ENCODE measurements at regions of chr14 and their contacts with region 1.

Region 1: DNA sequence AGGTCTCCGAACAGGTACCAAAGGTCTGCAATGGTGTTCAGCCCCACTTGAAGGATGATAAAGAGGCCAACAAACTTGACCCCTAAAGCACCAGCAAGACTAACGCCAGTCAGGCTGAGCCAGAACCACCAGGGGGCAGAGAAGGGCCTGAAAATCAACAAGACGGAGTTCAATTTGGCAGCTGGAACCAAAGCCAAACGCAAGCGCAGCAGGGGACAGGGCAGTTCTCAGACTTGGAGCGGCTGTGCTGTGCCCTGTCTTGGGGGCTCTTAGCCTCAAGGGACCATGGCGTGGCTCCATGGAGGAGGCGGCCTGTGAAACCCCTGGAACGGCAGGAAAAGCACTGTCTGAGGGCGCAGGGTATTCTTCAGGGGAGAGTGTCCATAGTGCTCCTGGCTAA is 19.6 kb downstream of the POMT2 start:
- DNase-seq: peak; percentile 52
- H3K4me3 ChIP-seq: no peak overlapping the region
- H3K27ac ChIP-seq: no peak overlapping the region
- H3K4me1 ChIP-seq: peaks cover 24% of the 10 kb centered on the region
- H3K27me3 ChIP-seq: no peaks in the 10 kb centered on the region
- CTCF ChIP-seq: peak; percentile 74 to 90

Region 2: GRCh38 chr14:77314043-77314442 is 12.9 kb after region 1 on chr14:
- CTCF ChIA-PET with region 1: interaction called, 14 read pairs
- dilution Hi-C with region 1: no loop called
- in situ Hi-C with region 1: no loop called
- intact Hi-C with region 1: loop called (anchors 1 kb)
- DNase-seq: peak; percentile 93
- H3K4me3 ChIP-seq: no peak overlapping the region
- H3K27ac ChIP-seq: peak overlapping the region; percentile 31
- H3K4me1 ChIP-seq: peaks cover 45% of the 10 kb centered on the region
- H3K27me3 ChIP-seq: no peaks in the 10 kb centered on the region
- CTCF ChIP-seq: no peak

Region 3: GRCh38 chr14:77320238-77320935 is 19.3 kb after region 1 on chr14 and contains the start of gene POMT2:
- CTCF ChIA-PET with region 1: interaction called, 16 read pairs
- dilution Hi-C with region 1: no loop called
- in situ Hi-C with region 1: no loop called
- intact Hi-C with region 1: loop called (anchors 1 kb)
- DNase-seq: peak; percentile 88
- H3K4me3 ChIP-seq: peak within 1 kb of the TSS; percentile 89 to 92 (median 90)
- H3K27ac ChIP-seq: peak within 1 kb of the TSS; percentile 87
- H3K4me1 ChIP-seq: peaks cover 38% of the 10 kb centered on the region
- H3K27me3 ChIP-seq: no peaks in the 10 kb centered on the region
- CTCF ChIP-seq: peak in 1 of 2 donors; percentile 34
- total RNA-seq, gene POMT2: 17.0 to 38.4 TPM

Region 4: GRCh38 chr14:77409131-77409533 is 108.0 kb after region 1 on chr14:
- CTCF ChIA-PET with region 1: interaction called, 8 read pairs
- dilution Hi-C with region 1: no loop called
- in situ Hi-C with region 1: no loop called
- intact Hi-C with region 1: loop called (anchors 1 kb)
- DNase-seq: peak; percentile 18
- H3K4me3 ChIP-seq: no peak overlapping the region
- H3K27ac ChIP-seq: no peak overlapping the region
- H3K4me1 ChIP-seq: no peaks in the 10 kb centered on the region
- H3K27me3 ChIP-seq: no peaks in the 10 kb centered on the region
- CTCF ChIP-seq: peak in 1 of 2 donors; percentile 39

Region 5: GRCh38 chr14:77554207-77554606 is 253.1 kb after region 1 on chr14:
- CTCF ChIA-PET with region 1: no interaction called
- dilution Hi-C with region 1: no loop called
- in situ Hi-C with region 1: no loop called
- intact Hi-C with region 1: loop called (anchors 1 kb)
- DNase-seq: no peak
- H3K4me3 ChIP-seq: no peak overlapping the region
- H3K27ac ChIP-seq: no peak overlapping the region
- H3K4me1 ChIP-seq: no peaks in the 10 kb centered on the region
- H3K27me3 ChIP-seq: no peaks in the 10 kb centered on the region
- CTCF ChIP-seq: no peak

Region 6: DNA sequence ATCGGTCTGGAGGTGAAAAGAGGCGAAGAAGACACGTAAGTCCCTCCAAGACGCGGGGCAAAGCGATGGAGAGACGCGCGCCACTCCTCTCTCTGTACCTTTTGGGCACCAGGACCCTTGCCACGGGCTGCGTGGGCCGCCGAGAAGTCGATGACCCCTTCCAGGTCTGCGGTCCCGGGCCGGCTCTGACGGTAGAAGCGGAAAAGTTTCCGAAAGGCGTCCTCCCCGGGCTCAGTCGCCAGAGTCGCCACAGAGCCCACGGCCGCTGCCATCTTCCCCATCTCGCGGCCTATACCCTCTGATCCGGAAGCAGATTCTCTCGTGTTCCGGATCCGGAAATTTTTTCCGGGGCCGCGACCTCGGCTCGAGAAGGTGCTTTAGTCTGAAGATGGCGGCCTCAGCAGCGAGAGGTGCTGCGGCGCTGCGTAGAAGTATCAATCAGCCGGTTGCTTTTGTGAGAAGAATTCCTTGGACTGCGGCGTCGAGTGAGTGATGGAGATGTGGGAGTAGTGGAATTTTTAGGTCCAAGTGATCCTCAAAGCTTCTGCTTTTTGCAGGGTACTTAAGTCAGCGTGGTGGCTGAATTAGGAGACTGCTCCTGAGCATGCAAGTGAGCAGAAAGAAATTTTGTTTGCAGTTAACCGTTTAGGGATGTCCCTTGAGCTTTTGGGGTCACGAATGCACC is 406.8 kb after region 1 on chr14 and contains the starts of genes ALKBH1 and SLIRP:
- CTCF ChIA-PET with region 1: no interaction called
- dilution Hi-C with region 1: no loop called
- in situ Hi-C with region 1: no loop called
- intact Hi-C with region 1: loop called (anchors 10 kb)
- DNase-seq: peak; percentile 82
- H3K4me3 ChIP-seq: peak within 1 kb of the TSS; percentile 77 to 99 (median 92)
- H3K27ac ChIP-seq: peak within 1 kb of the TSS; percentile 64
- H3K4me1 ChIP-seq: peaks cover 14% of the 10 kb centered on the region
- H3K27me3 ChIP-seq: no peaks in the 10 kb centered on the region
- CTCF ChIP-seq: no peak
- total RNA-seq, gene ALKBH1: 8.0 to 14.7 TPM
- total RNA-seq, gene SLIRP: 51.7 to 161 TPM

Measured in mammary epithelial cell (primary cell).